Esophagus squamous epithelium (tissue), 5 donors: ENCODE measurements at regions of chr4 and their contacts with region 1.

Region 1: DNA sequence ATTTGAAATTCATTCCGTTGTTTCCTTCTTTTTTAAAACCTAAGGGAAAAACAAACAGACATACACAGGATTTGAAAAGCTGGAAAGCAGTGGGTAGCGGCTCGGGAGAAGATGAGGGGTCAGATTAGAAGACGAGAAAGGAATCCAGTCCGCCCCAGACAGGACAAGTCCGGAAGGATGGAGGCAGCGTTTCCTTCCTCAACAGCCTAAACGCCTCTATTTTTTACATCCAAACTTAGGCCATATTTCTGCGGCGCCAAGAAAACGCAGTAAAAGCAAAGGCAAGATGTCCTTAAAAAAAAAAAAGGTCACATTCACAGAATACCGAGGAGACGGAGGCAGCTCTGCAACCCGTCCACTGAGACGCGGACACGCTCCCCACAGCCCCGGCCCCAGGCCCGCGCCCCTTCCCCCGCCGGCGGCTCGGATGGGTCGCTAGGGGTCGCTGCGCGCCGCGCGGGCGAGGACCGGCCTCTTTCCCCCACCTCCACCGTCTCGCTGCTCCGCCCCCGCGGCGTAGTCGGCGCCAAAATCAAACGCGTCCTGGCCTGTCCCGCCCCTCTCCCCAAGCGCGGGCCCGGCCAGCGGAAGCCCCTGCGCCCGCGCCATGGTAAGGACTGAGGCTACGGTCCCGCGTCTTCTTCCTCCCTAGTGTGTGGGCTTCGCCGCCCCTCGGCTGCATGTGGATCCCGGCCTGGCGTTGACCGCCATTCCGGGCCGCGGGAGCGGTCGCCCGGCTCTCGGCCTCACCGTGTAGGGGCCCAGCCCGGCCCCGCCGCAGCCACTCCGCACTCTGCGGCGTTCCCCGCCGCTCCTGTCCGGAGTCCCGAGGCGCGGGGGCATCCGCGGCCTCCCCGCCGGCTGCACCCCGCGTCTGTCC is at the start of gene MND1:
- DNase-seq: peak; percentile 7
- H3K4me3 ChIP-seq: peak within 1 kb of the TSS; percentile 67 to 82 (median 74)
- H3K27ac ChIP-seq: peak within 1 kb of the TSS; percentile 9 to 72 (median 72)
- H3K4me1 ChIP-seq: peaks cover 0 to 23% (median 10%) of the 10 kb centered on the region in 3 donors
- H3K27me3 ChIP-seq: no peaks in the 10 kb centered on the region
- CTCF ChIP-seq: peak; percentile 68 to 96 (median 86)
- POLR2A ChIP-seq: no peak
- total RNA-seq, gene MND1: 2.3 to 4.2 (median 3.8) TPM

Region 2: GRCh38 chr4:153294631-153295030 is 49.7 kb before region 1 on chr4:
- intact Hi-C with region 1: no loop called
- DNase-seq: no peak
- H3K4me3 ChIP-seq: no peak overlapping the region
- H3K27ac ChIP-seq: peak overlapping the region; percentile 36 to 76 (median 60)
- H3K4me1 ChIP-seq: peaks cover 8 to 44% (median 11%) of the 10 kb centered on the region in 3 donors
- H3K27me3 ChIP-seq: no peaks in the 10 kb centered on the region
- CTCF ChIP-seq: no peak
- POLR2A ChIP-seq: no peak

Region 3: GRCh38 chr4:153432968-153433753 is 88.8 kb after region 1 on chr4:
- intact Hi-C with region 1: loop called (anchors 10 kb)
- DNase-seq: peak; percentile 13
- H3K4me3 ChIP-seq: peak overlapping the region in 2 of 4 donors; percentile 15 to 29
- H3K27ac ChIP-seq: peak overlapping the region in 2 of 4 donors; percentile 9 to 42
- H3K4me1 ChIP-seq: peaks cover 0 to 16% (median 6%) of the 10 kb centered on the region in 3 donors
- H3K27me3 ChIP-seq: no peaks in the 10 kb centered on the region
- CTCF ChIP-seq: peak; percentile 59 to 90 (median 78)
- POLR2A ChIP-seq: no peak

Region 4: DNA sequence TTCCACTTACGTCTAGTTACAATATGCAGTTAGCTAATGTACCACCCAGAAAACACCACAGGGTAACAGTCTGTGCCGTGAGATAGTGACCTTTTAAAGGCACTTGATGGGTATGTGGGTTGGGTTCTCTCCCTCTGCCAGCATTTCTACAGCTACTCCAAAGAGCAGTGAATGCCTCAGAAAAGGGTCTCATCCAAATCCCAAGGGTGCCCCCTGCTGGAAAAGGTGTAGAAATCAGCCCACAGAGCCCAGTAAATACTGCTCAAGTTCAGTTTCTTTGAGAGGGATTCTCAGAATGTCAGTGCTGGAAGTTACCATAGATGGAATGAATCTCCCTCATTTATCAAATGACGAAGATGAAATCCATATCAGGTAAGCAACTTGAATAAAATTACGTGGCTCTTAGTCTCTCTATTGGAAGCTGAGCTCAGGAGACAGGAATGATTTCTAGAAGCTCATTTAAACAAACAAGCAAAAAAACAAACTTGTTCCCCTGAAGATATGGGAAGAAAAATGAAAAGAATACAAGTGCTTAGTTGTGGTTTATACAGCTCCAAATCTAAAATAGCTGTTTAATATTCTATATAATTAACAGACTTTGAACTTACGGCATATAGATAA is 405.9 kb after region 1 on chr4:
- intact Hi-C with region 1: loop called (anchors 10 kb)
- DNase-seq: no peak
- H3K4me3 ChIP-seq: no peak overlapping the region
- H3K27ac ChIP-seq: no peak overlapping the region
- H3K4me1 ChIP-seq: peaks cover 7 to 25% (median 16%) of the 10 kb centered on the region in 3 donors
- H3K27me3 ChIP-seq: no peaks in the 10 kb centered on the region
- CTCF ChIP-seq: peak; percentile 34 to 72 (median 59)
- POLR2A ChIP-seq: no peak